ENCODE measurements at regions of chr12 and their contacts with region 1.

Region 1: GRCh38 chr12:105164068-105164467 is 56.5 kb downstream of the WASHC4 start:
- DNase-seq: no peak
- H3K4me3 Mint-ChIP-seq: no peak overlapping the region
- H3K27ac Mint-ChIP-seq: no peak overlapping the region
- H3K4me1 Mint-ChIP-seq: no peaks in the 10 kb centered on the region
- H3K27me3 Mint-ChIP-seq: no peaks in the 10 kb centered on the region

Region 2: DNA sequence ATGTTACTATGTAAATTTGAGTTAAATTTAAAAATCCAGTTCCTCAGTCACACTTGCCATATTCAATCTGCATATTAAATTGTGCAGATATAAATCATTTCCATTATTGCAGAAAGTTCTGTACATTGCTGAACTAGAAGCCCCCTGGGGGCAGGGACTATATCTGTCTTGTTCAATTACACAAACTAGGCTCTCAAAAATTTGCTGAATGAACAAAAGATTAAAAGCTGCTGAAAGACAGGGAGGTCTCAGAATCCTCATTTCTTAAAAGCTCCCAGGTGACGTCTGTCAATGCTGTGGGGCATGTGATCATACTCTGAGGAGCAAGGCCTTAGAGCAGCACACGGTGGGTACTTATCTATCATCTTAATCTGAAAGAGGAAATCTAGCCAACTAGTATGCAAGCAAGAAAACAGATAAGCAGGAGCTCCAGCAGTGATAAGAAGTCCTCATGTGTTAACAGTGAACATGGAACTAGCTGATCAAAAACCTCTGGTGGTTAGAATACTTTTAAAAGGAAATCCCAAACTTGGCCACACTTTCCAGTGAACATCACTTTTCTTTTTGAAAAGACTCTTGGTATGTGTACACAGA is 11.4 kb after region 1 on chr12:
- CTCF ChIA-PET with region 1: no interaction called
- POLR2A ChIA-PET with region 1: interaction called, 10 read pairs
- DNase-seq: no peak
- H3K4me3 Mint-ChIP-seq: no peak overlapping the region
- H3K27ac Mint-ChIP-seq: no peak overlapping the region
- H3K4me1 Mint-ChIP-seq: peaks cover 7% of the 10 kb centered on the region
- H3K27me3 Mint-ChIP-seq: no peaks in the 10 kb centered on the region

Measured in activated CD4-positive, alpha-beta memory T cell treated with anti-CD3 and anti-CD28 coated beads, Interleukin-2, amount 10 ng/mL, durations not matched to agents 7 days and 5 days (primary cell).